Activated CD4-positive, alpha-beta memory T cell treated with anti-CD3 and anti-CD28 coated beads for 36 hours (primary cell): ENCODE measurements at regions of chr1 and their contacts with region 1.

Region 1: DNA sequence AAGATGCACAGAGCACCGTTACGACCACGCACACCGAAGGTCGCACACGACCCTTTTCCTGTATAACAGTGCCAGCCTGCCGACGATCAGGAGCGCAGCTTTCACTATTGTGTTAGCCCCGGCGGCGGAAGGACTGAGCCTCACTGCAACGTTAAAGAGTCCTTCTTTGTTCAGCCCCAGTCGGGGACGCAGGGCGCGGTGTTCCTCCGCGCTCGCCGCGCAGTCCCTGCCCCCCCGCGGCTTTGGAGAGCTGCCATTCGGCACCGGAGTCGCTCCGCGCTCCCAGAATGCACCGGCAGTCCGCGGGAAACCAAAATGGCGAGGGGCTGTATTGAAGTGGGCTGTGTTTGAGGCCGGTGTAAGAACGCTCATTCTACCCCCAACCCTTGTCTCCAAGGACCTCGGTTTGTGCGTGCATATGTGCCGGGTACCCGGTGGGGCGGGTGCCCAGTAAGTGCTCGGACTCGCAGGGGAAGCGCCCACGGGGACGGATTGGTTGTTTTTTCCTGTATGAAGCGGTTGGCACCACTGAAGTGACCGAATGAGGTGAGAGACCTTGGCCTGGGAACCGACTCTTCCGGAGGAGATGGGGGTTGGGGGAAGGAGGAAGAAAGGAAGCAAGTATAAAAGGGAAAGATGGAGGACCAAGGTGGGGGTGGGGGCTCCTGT is at the start of gene MTF2:
- DNase-seq: peak; percentile 97
- H3K4me3 Mint-ChIP-seq: peak within 1 kb of the TSS; percentile 85
- H3K27ac Mint-ChIP-seq: peak within 1 kb of the TSS; percentile 88
- H3K4me1 Mint-ChIP-seq: peaks cover 28% of the 10 kb centered on the region
- H3K27me3 Mint-ChIP-seq: no peaks in the 10 kb centered on the region
- total RNA-seq, gene MTF2: 53.6 to 55.1 TPM

Region 2: GRCh38 chr1:92583821-92584760 is 495.0 kb before region 1 on chr1:
- CTCF ChIA-PET with region 1: no interaction called
- POLR2A ChIA-PET with region 1: no interaction called
- intact Hi-C with region 1: loop called (anchors 10 kb)
- DNase-seq: no peak
- H3K4me3 Mint-ChIP-seq: peak overlapping the region; percentile 65
- H3K27ac Mint-ChIP-seq: peak overlapping the region; percentile 92
- H3K4me1 Mint-ChIP-seq: peaks cover 64% of the 10 kb centered on the region
- H3K27me3 Mint-ChIP-seq: no peaks in the 10 kb centered on the region

Region 3: DNA sequence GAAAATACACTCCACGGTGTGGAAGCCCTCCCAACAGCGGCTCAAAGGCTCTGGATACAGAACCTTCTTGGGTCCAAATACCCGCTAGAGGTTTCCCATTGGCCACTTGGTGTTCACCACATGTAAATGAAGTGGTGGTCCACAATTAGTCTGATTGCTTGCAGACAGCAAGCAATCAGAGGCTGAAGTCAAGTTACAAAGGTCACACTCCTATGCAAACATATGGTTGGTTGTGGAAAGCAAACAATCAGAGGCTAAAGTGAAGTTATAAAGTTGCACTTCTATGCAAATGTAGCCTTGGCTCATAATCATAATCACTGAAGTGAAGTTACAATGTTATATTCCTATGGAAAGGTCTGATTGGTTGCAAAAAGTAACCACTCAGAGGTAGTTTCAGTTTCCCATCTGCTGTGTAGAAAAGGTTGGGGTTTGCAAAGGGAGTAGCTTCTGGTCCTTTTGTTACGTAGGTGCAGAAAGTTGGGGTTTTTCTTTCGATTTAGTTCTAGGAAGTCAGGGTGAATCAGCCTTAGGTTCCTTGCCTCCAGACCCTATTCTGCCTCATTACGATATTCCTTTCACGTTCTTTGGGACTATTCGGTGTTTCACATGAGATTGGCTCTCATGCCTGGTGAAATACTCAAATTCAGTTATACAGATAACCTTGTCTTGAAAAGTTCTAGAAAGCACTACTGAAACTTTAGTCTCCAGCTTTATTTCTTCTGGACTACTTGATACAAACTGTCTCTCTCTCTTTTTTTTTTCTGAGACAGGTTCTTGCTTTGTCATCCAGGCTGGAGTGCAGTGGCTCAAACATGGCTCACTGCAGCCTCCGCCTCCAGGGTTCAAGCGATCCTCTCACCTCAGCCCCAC is 36.7 kb before region 1 on chr1:
- CTCF ChIA-PET with region 1: interaction called, 3 read pairs
- POLR2A ChIA-PET with region 1: interaction called, 5 read pairs
- intact Hi-C with region 1: loop called (anchors 1 kb)
- DNase-seq: peak; percentile 21
- H3K4me3 Mint-ChIP-seq: peak overlapping the region; percentile 71
- H3K27ac Mint-ChIP-seq: peak overlapping the region; percentile 88
- H3K4me1 Mint-ChIP-seq: peaks cover 28% of the 10 kb centered on the region
- H3K27me3 Mint-ChIP-seq: no peaks in the 10 kb centered on the region

Region 4: GRCh38 chr1:93129507-93130099 is 50.5 kb after region 1 on chr1:
- CTCF ChIA-PET with region 1: interaction called, 3 read pairs
- POLR2A ChIA-PET with region 1: no interaction called
- intact Hi-C with region 1: loop called (anchors 5 kb)
- DNase-seq: no peak
- H3K4me3 Mint-ChIP-seq: no peak overlapping the region
- H3K27ac Mint-ChIP-seq: no peak overlapping the region
- H3K4me1 Mint-ChIP-seq: peaks cover 2% of the 10 kb centered on the region
- H3K27me3 Mint-ChIP-seq: no peaks in the 10 kb centered on the region

Region 5: GRCh38 chr1:93304716-93305138 is 225.6 kb after region 1 on chr1:
- CTCF ChIA-PET with region 1: interaction called, 30 read pairs
- POLR2A ChIA-PET with region 1: no interaction called
- intact Hi-C with region 1: loop called (anchors 2 kb)
- DNase-seq: peak; percentile 26
- H3K4me3 Mint-ChIP-seq: no peak overlapping the region
- H3K27ac Mint-ChIP-seq: no peak overlapping the region
- H3K4me1 Mint-ChIP-seq: no peaks in the 10 kb centered on the region
- H3K27me3 Mint-ChIP-seq: no peaks in the 10 kb centered on the region

Region 6: DNA sequence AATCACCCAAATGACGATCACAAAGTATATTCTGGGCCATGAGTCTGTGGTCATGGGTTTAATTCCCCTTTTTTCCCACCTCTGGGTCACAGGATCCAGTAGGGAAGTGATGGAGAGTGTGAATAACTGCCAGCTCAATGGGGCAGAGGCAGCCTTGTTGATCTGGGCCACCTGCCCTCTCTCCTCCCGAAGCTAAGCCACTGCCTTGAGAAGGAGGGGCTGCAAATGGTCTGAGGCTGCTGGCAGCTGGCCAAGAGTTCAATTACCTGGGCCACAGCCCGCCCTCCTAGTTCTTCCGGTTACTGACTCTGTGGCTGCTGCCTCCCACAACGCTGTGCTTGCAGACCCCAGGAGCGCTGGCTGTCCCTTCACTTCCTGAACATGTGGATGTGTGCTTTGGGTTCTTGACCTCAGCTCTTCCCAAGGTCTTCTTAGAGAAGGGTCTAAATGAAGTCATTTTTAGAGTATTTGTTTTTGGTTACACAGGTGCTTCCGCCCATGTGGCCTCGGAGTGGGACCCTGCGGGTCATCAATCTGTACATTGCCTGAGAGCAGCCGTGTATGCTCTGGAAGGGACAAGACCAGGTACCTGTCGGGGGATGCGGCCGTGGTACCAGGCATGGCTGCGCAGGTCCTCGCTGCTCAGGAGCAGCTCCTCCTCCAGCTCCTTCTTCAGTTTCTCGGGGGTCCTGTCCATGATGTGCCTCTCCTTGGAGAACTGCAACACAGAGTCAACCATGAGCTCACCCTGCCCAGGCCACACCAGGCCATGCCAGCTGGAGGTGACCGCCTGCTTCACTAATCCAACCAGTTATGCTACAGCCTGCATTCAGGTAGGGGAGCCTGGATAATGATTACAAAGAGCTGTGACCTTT is 512.8 kb after region 1 on chr1:
- CTCF ChIA-PET with region 1: no interaction called
- POLR2A ChIA-PET with region 1: no interaction called
- intact Hi-C with region 1: no loop called
- DNase-seq: peak; percentile 10
- H3K4me3 Mint-ChIP-seq: no peak overlapping the region
- H3K27ac Mint-ChIP-seq: no peak overlapping the region
- H3K4me1 Mint-ChIP-seq: peaks cover 8% of the 10 kb centered on the region
- H3K27me3 Mint-ChIP-seq: peaks cover 2% of the 10 kb centered on the region

Region 7: GRCh38 chr1:93607814-93608186 is 528.7 kb after region 1 on chr1:
- CTCF ChIA-PET with region 1: interaction called, 4 read pairs
- POLR2A ChIA-PET with region 1: no interaction called
- intact Hi-C with region 1: loop called (anchors 5 kb)
- DNase-seq: peak; percentile 85
- H3K4me3 Mint-ChIP-seq: no peak overlapping the region
- H3K27ac Mint-ChIP-seq: peak overlapping the region; percentile 43
- H3K4me1 Mint-ChIP-seq: peaks cover 39% of the 10 kb centered on the region
- H3K27me3 Mint-ChIP-seq: peaks cover 21% of the 10 kb centered on the region